Cardiac septum (tissue), 1 donor: ENCODE measurements at regions of chr5 and their contacts with region 1.

Region 1: DNA sequence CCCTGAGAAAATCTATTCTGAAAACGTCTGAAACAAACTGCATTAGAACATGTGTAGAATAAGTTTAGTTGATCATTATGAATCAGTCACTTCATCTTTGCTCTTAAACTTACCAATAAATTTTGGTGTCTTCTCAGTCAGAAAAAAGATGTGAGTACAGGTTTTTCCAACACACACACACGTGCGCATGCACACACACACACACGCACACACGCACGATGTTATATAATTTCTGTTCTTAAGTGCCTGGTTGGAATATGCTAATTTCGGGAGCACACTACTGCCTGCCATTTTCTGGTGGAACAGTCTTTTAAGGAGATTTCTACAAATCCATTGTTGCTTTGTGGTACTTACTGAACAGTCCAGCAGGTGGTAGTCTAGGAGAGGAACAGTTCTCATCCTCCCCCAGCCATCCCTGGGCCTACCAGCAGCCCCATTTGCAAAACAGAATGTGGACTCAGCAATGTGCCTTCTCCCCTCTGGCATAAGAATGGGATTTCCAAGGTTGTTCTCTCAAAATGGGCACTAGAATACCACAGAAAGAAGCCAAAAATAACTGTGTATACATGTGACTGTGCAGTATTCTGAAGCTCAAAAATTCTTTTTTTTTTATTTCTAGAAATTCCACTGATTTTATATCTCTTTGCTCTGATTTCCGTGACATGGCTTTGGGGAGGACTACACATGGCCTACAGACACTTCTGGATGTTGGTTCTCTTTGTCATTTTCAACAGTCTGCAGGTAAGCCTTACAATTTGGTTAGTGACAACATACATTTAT is 281.3 kb downstream of the ARRDC3 start:
- DNase-seq: peak; percentile 82

Region 2: GRCh38 chr5:90866333-90866732 is 235.5 kb before region 1 on chr5:
- intact Hi-C with region 1: loop called (anchors 5 kb)
- DNase-seq: no peak

Region 3: DNA sequence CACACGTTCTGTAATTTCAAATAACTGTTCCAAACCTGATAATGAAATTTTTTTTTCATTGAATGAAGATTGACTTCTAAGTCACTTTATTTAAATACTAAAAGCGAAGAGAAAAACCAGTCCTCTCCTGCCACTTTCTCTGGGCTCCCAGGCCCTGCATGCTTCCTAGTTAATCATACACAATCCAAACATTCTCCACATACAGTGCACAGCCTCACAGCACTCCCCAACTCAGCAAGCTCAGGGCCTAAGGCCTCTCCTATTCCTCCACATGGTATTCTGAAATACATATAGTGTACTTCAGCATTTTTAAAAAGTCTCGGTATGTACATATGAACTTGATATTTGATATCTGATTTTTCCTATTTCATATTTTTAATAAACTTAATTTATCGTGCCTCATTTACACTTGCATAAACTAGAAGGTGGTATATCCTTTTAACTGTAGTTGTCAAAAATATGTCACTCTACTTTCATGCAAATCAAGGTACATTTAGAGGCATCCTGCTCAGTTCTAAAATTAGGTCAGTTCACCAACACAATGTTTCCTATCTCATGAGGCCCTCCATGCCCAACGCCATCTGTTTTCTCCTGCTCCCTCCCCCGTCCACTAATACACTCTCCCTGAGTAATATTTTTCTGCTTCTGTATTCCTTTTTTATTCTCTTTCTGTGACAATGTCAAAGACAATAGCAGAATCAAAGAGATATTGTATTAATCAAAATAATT is 74.7 kb after region 1 on chr5:
- intact Hi-C with region 1: loop called (anchors 5 kb)
- DNase-seq: no peak

Region 4: GRCh38 chr5:91419571-91420537 is 318.1 kb after region 1 on chr5:
- intact Hi-C with region 1: loop called (anchors 2 kb)
- DNase-seq: no peak